ENCODE measurements at regions of chr19 and their contacts with region 1.

Region 1: DNA sequence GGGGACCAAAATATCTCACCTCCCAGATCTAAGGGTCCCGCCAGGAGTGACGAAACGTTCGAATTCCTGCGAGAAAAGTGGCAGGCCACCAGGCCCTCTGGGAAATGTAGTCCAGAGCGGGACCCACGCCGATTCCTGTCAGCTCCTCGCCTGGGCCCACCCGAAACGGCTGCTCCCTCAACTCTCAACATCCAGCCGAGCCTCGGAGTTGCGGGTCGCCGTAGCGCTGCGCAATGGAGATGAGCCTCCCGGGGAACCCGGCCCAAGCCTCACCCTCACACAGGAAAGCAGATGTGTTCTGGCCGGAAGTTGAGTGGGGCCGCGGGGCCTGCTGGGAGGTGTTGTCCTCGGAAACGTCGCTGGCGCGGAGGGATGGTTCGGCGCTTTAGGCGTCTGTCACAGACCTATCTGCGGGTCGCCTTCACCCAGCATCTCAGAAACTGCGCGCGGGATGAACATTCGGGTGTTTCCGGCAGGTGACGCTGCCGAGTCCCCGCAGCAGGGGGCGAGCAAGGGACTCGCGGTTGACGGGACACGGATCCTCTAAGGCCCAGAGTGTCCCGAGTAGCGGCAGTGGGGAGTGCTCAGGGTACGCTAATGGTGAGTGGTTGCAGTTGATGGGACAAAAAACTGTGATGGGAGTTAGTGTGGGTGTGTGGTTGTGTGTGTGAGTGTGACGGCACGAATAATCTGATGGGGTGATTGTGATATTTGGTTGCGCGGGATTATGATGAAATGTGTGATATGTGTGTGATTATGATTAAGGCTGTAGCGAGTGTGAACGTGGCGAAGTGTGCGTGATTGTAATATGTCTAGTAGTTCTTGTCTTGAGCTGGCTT is at the starts of genes ZNF568 and ZNF829:
- DNase-seq: peak; percentile 92
- H3K4me3 Mint-ChIP-seq: peak within 1 kb of the TSS; percentile 92
- H3K27ac Mint-ChIP-seq: peak within 1 kb of the TSS; percentile 95
- H3K4me1 Mint-ChIP-seq: peaks cover 21% of the 10 kb centered on the region
- H3K27me3 Mint-ChIP-seq: no peaks in the 10 kb centered on the region
- total RNA-seq, gene ZNF568: 4.4 and 4.9 TPM in 2 replicates
- total RNA-seq, gene ZNF829: 5.3 and 5.4 TPM in 2 replicates

Region 2: DNA sequence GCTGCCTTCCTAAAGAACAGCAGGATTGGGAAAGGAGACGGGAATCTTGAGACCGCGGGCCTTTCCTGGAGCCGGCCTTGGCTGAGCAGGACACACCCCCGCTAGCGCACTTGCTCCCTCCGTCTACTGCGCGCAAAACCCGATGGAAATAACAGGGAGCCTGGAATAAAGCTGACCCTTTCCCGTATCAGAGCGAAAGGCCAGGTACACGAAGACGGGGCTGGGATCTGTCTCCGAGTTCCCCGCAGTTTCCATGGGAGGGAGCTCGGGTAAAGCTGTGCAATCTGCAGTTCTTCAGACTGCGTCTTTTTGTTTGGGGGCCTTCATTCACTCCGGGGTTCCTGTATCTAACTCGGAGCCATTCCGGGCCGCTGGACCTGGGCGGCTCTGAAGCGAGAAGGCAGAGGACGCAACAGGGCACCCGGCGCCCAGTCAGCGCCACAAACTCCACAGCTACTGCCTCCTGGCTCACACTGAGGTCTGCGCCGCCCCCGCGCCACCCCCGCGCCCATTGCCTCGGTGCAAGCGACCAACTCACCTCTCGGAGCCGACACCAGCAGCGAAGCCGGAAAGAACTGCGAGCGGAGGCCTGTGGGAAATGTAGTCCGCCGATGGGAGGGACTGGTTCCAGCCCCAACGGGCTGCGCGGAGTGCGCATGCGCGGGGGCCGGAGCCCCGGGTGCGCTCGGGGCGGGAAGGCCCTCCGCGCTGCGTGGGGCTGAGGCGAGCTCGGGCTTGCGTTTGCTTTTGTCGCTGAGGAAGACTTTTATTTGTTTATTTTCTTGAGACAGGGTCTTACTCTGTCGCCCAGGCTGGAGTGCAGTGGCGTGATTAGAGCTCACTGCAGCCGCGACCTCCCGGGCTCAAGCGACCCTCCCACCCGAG is 537.3 kb before region 1 on chr19 and contains the start of gene ZFP14:
- intact Hi-C with region 1: loop called (anchors 10 kb)
- DNase-seq: peak; percentile 91
- H3K4me3 Mint-ChIP-seq: peak within 1 kb of the TSS; percentile 86
- H3K27ac Mint-ChIP-seq: peak within 1 kb of the TSS; percentile 73
- H3K4me1 Mint-ChIP-seq: peaks cover 13% of the 10 kb centered on the region
- H3K27me3 Mint-ChIP-seq: no peaks in the 10 kb centered on the region
- total RNA-seq, gene ZFP14: 0.83 and 1.7 TPM in 2 replicates

Region 3: GRCh38 chr19:36665832-36666231 is 250.4 kb before region 1 on chr19:
- intact Hi-C with region 1: loop called (anchors 5 kb)
- DNase-seq: no peak
- H3K4me3 Mint-ChIP-seq: peak overlapping the region; percentile 99
- H3K27ac Mint-ChIP-seq: peak overlapping the region; percentile 26
- H3K4me1 Mint-ChIP-seq: peaks cover 16% of the 10 kb centered on the region
- H3K27me3 Mint-ChIP-seq: no peaks in the 10 kb centered on the region

Region 4: GRCh38 chr19:36837906-36838783 is 78.1 kb before region 1 on chr19 and contains the start of gene ZNF790:
- intact Hi-C with region 1: loop called (anchors 1 kb)
- DNase-seq: peak; percentile 81
- H3K4me3 Mint-ChIP-seq: no peak within 1 kb of the TSS
- H3K27ac Mint-ChIP-seq: no peak within 1 kb of the TSS
- H3K4me1 Mint-ChIP-seq: no peaks in the 10 kb centered on the region
- H3K27me3 Mint-ChIP-seq: no peaks in the 10 kb centered on the region
- total RNA-seq, gene ZNF790: 4.4 and 4.5 TPM in 2 replicates

Region 5: DNA sequence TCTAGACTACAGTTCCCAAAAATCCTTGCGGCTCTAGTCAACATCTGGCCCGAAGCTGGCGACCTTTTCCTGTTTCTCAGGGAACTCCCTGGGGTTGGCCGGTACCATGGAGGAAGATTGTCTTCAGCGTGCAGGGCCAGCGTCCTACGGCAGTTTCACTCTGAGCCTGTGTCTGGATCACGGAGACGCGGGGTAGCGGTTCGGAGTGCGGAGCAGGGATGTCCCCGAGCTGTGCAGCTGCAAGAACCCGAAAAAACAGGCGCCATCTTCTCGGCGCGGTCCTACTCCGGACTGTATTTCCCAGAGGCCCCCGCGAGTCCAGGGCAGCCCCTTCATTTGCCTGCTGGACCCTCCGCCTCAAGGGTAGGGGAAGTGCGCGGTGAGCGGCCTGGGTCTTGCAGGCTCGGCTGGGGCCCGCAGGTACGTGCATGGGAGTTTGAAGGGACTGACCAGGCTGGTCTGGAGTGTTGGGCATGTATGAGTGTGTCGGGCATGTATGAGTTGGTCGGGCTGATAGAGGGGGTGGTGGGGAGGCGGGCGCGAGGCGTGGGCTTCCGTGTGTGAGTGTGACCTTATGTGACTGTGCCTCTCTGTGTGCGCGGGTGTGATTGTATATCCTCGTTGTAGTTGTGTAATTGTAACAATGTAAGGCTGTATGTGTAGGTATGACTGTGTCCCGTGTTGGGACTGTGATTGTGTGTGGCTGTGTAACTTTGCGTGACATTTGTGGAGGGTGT is 301.8 kb after region 1 on chr19 and contains the start of gene ZNF383:
- intact Hi-C with region 1: loop called (anchors 1 kb)
- DNase-seq: peak; percentile 78
- H3K4me3 Mint-ChIP-seq: peak within 1 kb of the TSS; percentile 96
- H3K27ac Mint-ChIP-seq: peak within 1 kb of the TSS; percentile 90
- H3K4me1 Mint-ChIP-seq: peaks cover 20% of the 10 kb centered on the region
- H3K27me3 Mint-ChIP-seq: no peaks in the 10 kb centered on the region
- total RNA-seq, gene ZNF383: 6.3 TPM in 2 replicates

Region 6: GRCh38 chr19:37655689-37656371 is 739.6 kb after region 1 on chr19:
- intact Hi-C with region 1: loop called (anchors 1 kb)
- DNase-seq: peak; percentile 83
- H3K4me3 Mint-ChIP-seq: peak overlapping the region; percentile 90
- H3K27ac Mint-ChIP-seq: peak overlapping the region; percentile 93
- H3K4me1 Mint-ChIP-seq: peaks cover 28% of the 10 kb centered on the region
- H3K27me3 Mint-ChIP-seq: no peaks in the 10 kb centered on the region